ENCODE measurements at regions of chr4 and their contacts with region 1.

Region 1: DNA sequence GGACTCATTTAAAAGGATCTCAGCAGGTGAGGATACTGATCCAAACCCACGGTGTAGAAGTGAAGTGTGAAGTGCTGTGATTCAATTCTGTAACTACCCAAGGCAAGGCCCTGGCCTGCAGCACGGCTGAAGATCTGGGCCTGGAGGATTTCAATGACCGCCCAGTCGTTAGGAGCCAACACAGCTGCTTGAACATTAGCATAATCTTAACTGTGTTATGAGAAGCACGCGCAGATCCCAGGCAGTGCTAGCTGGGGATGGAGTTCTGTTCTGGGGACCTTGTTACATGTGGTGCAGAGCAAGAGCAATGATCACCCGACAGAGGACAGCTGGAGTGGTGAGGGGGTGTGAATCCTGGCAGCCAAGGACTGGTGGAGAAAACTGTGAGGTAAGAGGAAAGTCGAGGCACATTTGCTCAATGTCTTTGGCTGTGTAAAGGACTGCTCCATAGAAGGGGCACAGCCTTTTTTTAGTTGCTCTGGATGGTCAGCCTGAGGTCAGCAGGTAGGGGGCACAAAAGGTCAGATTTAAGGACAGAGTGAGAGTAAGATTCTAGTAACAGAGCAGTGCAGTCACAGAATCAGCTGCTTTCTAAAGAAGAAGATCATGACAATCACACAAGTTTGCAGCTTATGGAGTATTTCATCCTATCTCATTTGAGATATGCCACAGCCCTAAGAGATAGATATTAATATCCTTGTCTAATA is 181.8 kb downstream of the DCLK2 start:
- DNase-seq: no peak
- H3K27ac ChIP-seq: no peak overlapping the region
- CTCF ChIP-seq: no peak

Region 2: DNA sequence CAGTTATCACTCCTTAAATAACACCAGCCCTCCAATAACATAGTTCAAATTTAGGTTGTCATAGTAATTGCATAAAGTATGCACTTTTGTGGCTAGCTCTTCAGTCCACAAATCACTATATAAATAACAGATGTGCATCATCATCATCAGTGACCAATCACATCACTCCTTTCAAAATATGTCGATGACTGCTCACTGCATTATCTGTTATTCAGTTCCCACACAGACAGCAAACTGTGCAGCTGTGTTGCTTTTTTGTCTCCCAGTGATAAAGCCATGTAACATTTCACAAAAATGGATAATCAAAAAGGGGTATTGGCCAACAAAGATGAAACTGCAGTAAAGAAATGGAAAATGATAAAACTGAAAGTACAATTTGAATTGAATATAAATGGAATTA is 23.7 kb after region 1 on chr4:
- CTCF ChIA-PET with region 1: no interaction called
- POLR2A ChIA-PET with region 1: no interaction called
- DNase-seq: no peak
- H3K27ac ChIP-seq: no peak overlapping the region
- CTCF ChIP-seq: no peak

Region 3: GRCh38 chr4:151055539-151055938 is 795.5 kb after region 1 on chr4:
- CTCF ChIA-PET with region 1: no interaction called
- POLR2A ChIA-PET with region 1: interaction called, 10 read pairs
- DNase-seq: no peak
- H3K27ac ChIP-seq: no peak overlapping the region
- CTCF ChIP-seq: no peak